ENCODE measurements at regions of chr11 and their contacts with region 1.

Region 1: GRCh38 chr11:66386171-66387069 is 14.9 kb upstream of the SLC29A2 start:
- DNase-seq: peak; percentile 88
- ATAC-seq: peak; percentile 85
- H3K4me3 ChIP-seq: peak overlapping the region in 2 of 5 experiments; percentile 11 to 34
- H3K4me3 Mint-ChIP-seq: peak overlapping the region; percentile 21
- H3K27ac ChIP-seq: no peak overlapping the region
- H3K27ac Mint-ChIP-seq: no peak overlapping the region
- H3K4me1 ChIP-seq: peaks cover 7 to 12% of the 10 kb centered on the region in 2 donors
- H3K4me1 Mint-ChIP-seq: peaks cover 10% of the 10 kb centered on the region
- H3K27me3 ChIP-seq: no peaks in the 10 kb centered on the region
- H3K27me3 Mint-ChIP-seq: no peaks in the 10 kb centered on the region
- CTCF ChIP-seq: peak; percentile 94

Region 2: DNA sequence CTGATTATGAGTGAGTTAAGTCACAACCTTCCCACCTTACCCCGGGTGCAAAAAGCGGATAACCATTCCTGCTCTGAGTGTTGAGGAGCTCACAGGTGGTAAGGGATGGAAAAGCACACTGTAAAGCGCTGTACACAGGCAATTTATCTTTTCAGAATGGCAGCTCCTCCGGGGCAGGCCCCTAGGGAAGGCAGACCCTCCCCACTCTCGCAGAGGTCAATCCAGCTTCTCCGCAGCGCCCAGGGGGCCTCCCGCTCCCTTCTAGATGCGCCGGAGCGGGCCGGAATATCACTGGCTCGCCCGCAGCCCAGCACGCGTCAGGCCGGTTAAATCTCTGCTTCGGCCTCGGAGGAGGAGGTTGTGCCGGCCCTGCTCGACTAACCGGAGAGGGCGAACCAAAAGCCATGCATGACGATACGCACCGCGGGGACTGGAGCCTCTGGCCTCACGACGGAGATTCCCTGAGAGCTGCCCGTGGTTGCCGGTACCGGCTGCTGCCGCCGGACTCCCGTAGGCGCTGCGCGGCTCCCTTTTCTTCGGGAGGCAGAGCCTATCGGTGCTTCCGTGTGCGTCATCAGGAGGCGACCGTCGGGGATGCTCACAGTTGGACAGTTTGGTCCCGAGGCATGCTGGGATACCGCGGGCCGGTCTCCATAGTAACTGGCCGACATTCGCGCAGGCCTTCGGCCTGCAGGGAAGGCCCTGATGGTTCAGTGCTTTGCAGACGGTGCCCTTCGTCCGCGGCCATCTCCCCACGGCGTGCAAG is 41.7 kb before region 1 on chr11 and contains the start of gene BRMS1:
- CTCF ChIA-PET with region 1: interaction called, 19 read pairs
- POLR2A ChIA-PET with region 1: no interaction called
- intact Hi-C with region 1: loop called (anchors 5 kb)
- DNase-seq: peak; percentile 96
- ATAC-seq: peak; percentile 85
- H3K4me3 ChIP-seq: peak within 1 kb of the TSS; percentile 74 to 92 (median 84)
- H3K4me3 Mint-ChIP-seq: peak within 1 kb of the TSS; percentile 97
- H3K27ac ChIP-seq: peak within 1 kb of the TSS; percentile 75 to 86
- H3K27ac Mint-ChIP-seq: peak within 1 kb of the TSS; percentile 96
- H3K4me1 ChIP-seq: peaks cover 19 to 44% of the 10 kb centered on the region in 2 donors
- H3K4me1 Mint-ChIP-seq: peaks cover 47% of the 10 kb centered on the region
- H3K27me3 ChIP-seq: no peaks in the 10 kb centered on the region
- H3K27me3 Mint-ChIP-seq: no peaks in the 10 kb centered on the region
- CTCF ChIP-seq: peak; percentile 16
- total RNA-seq, gene BRMS1: 50.9 and 58.3 TPM in 2 replicates

Region 3: GRCh38 chr11:66371627-66372415 is 14.6 kb before region 1 on chr11 and contains the start of gene SLC29A2:
- CTCF ChIA-PET with region 1: interaction called, 29 read pairs
- POLR2A ChIA-PET with region 1: interaction called, 5 read pairs
- intact Hi-C with region 1: loop called (anchors 2 kb)
- DNase-seq: peak; percentile 78
- ATAC-seq: peak; percentile 81
- H3K4me3 ChIP-seq: peak within 1 kb of the TSS; percentile 70 to 84 (median 77)
- H3K4me3 Mint-ChIP-seq: peak within 1 kb of the TSS; percentile 87
- H3K27ac ChIP-seq: peak within 1 kb of the TSS; percentile 76 to 79
- H3K27ac Mint-ChIP-seq: peak within 1 kb of the TSS; percentile 88
- H3K4me1 ChIP-seq: peaks cover 9 to 15% of the 10 kb centered on the region in 2 donors
- H3K4me1 Mint-ChIP-seq: peaks cover 10% of the 10 kb centered on the region
- H3K27me3 ChIP-seq: peaks cover 0 to 3% (median 0%) of the 10 kb centered on the region in 4 experiments
- H3K27me3 Mint-ChIP-seq: peaks cover 3% of the 10 kb centered on the region
- CTCF ChIP-seq: no peak
- total RNA-seq, gene SLC29A2: 18.5 and 20.1 TPM in 2 replicates

Region 4: GRCh38 chr11:66438504-66439466 is 52.4 kb after region 1 on chr11 and contains the start of gene MRPL11:
- CTCF ChIA-PET with region 1: interaction called, 18 read pairs
- POLR2A ChIA-PET with region 1: no interaction called
- intact Hi-C with region 1: no loop called
- DNase-seq: peak; percentile 95
- ATAC-seq: peak; percentile 98
- H3K4me3 ChIP-seq: peak within 1 kb of the TSS; percentile 71 to 98 (median 78)
- H3K4me3 Mint-ChIP-seq: peak within 1 kb of the TSS; percentile 93
- H3K27ac ChIP-seq: peak within 1 kb of the TSS; percentile 76 to 79
- H3K27ac Mint-ChIP-seq: peak within 1 kb of the TSS; percentile 98
- H3K4me1 ChIP-seq: peaks cover 6 to 10% of the 10 kb centered on the region in 2 donors
- H3K4me1 Mint-ChIP-seq: peaks cover 14% of the 10 kb centered on the region
- H3K27me3 ChIP-seq: no peaks in the 10 kb centered on the region
- H3K27me3 Mint-ChIP-seq: no peaks in the 10 kb centered on the region
- CTCF ChIP-seq: peak; percentile 77
- total RNA-seq, gene MRPL11: 26.7 and 29.2 TPM in 2 replicates